ENCODE measurements at regions of chr1 and their contacts with region 1.

Region 1: DNA sequence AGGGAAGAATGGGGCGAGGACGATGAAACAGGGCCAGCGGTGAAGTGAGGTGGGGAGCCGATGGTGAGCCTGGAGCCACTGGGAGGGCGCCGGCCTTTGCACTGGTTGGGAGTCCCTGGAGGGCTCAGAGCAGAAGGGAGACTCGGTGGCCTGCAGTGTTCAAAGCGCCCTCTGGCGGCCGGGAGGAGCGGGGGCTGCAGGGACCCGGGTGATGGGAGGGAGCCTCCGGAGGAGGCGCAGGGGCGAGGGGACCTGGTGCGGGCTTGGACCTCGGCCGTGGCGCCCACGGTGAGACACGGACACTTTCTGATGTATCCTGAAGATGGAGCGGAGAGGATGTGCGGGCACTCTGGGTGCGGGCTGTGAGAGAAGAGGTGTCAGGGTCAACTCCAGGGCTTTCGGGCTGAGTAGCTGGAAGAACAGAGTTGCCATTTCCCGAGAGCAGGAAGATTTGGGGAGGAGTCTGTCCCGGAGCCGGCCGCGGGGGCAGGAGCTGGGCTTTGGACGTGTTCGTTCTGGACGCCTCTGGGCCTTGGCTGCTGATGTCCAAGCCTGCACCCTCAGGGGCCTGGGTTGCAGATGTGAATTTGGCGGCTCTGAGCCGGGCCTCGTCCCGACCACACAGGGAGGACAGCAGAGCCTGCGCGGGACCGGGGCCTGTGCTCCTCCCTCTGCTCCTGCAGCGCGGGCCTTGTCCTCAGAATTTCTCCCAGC is 29.7 kb downstream of the HEYL start:
- DNase-seq: no peak

Region 2: GRCh38 chr1:39653546-39654031 is 43.8 kb after region 1 on chr1:
- intact Hi-C with region 1: loop called (anchors 1 kb)
- DNase-seq: peak; percentile 87

Region 3: DNA sequence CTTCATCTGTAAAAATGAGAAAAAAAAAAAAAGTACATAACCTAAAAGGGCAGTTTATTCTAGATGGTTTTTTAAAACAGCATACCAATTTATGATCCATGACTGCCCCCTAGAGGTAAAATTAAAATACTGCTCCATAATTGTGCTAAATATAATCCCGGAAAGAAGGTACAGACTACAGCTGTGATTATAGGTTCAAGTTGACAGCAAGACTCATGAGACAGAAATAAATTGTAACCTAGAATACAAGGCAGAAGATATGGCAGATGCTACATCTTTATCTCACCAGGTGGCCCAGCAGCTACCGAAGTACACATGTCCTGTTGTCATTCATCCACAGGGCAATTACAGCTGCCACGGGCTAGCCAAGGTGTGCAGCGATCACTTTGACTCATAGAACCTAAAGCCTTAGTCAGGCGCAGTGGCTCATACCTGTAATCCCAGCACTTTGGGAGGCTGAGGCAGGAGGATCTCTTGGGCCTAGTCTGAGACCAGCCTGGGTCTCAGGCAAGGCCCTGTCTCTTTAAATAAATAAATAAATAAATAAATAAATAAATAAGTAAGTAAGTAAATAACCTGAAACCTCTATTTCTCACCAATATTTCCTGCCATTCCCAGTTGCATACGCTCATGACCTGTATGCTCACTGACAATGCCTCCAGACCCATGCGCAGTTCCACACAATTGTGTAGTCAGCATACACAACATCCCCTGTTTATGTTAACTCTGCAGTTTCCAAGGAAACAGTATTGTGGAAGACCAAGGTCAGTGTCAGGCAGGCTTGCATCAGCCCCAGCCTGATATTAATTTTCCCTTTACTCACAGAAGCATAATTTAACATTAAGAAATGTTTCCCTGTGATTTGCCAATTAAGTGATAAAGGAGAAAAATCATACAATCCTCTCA is 110.6 kb after region 1 on chr1:
- intact Hi-C with region 1: loop called (anchors 2 kb)
- DNase-seq: no peak

Region 4: GRCh38 chr1:39799770-39800470 is 190.1 kb after region 1 on chr1:
- intact Hi-C with region 1: loop called (anchors 5 kb)
- DNase-seq: peak; percentile 90

Measured in cardiac septum (tissue), 1 donor.